ENCODE measurements at regions of chr9 and their contacts with region 1.

Region 1: GRCh38 chr9:113401027-113401792 is at the start of gene ALAD:
- DNase-seq: peak; percentile 100
- total RNA-seq, gene ALAD: 33.1 to 41.2 TPM

Region 2: DNA sequence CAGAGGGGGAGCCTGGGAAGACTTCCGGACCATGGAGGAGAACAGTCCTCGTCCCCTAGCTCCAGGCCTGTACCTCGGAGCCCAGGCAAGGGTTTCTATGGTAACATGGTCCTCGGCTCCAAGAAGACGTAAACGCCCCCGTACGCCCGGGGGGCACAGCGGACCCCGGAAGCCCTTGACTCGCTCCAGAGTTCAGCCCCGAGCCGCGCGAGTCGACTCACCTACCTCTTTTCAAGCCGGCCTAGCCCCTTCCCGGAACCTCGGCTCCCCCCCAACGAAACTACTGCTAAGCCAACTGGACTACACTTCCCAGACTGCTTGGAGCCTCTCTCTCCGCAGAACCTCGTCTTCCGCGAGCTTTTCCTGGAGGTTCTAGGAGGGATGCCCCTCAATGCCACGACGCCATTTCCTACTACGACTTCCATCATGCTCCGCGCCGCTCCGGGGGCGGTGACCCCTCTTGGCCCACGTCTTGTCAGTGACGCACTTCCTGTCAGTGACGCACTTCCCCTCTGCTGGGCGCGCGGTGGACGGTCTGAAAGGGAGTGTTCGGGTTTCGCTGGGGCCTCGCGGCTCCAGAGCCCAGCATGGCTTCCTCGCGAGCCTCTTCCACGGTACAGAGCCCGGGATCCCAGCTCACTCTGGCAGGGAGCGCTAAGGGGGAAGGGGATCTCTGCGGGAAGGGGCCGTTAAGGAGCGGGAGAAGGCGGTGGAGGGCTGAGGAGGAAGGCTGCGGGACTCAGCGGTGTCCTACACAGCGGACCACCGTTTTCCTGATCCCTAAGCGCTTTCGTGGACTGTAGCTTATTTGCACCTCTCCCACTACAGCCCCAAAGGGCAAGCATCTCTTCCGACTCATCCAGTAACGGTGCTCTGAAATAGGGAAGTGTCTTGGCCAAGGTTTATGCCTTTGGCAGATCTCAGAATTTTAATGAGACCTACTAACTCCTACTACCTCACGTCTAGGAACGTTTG is 125.8 kb before region 1 on chr9 and contains the starts of genes CDC26 and PRPF4:
- intact Hi-C with region 1: loop called in 1 of 2 experiments (anchors 10 kb)
- DNase-seq: peak; percentile 99
- total RNA-seq, gene CDC26: 24.5 to 32.3 TPM
- total RNA-seq, gene PRPF4: 13.7 TPM

Measured in posterior vena cava (tissue), 2 donors.